Activated B cell treated with CpG ODN at 0.5 μM for 24 hours (primary cell): ENCODE measurements at regions of chr16 and their contacts with region 1.

Region 1: GRCh38 chr16:1342526-1343427 is 8.9 kb downstream of the TSR3 start:
- DNase-seq: peak; percentile 87
- ATAC-seq: peak; percentile 90
- H3K4me3 Mint-ChIP-seq: peak overlapping the region; percentile 75
- H3K27ac Mint-ChIP-seq: peak overlapping the region; percentile 50
- H3K4me1 Mint-ChIP-seq: peaks cover 20% of the 10 kb centered on the region
- H3K27me3 Mint-ChIP-seq: no peaks in the 10 kb centered on the region
- CTCF ChIP-seq: no peak

Region 2: GRCh38 chr16:1331712-1332617 is 10.8 kb before region 1 on chr16:
- CTCF ChIA-PET with region 1: interaction called, 3 read pairs
- POLR2A ChIA-PET with region 1: interaction called, 17 read pairs
- intact Hi-C with region 1: loop called (anchors 1 kb)
- DNase-seq: peak; percentile 59
- ATAC-seq: peak; percentile 64
- H3K4me3 Mint-ChIP-seq: peak overlapping the region; percentile 78
- H3K27ac Mint-ChIP-seq: peak overlapping the region; percentile 86
- H3K4me1 Mint-ChIP-seq: peaks cover 36% of the 10 kb centered on the region
- H3K27me3 Mint-ChIP-seq: peaks cover 7% of the 10 kb centered on the region
- CTCF ChIP-seq: no peak

Region 3: GRCh38 chr16:1385232-1385631 is 42.5 kb after region 1 on chr16:
- CTCF ChIA-PET with region 1: no interaction called
- POLR2A ChIA-PET with region 1: no interaction called
- intact Hi-C with region 1: no loop called
- DNase-seq: no peak
- ATAC-seq: no peak
- H3K4me3 Mint-ChIP-seq: no peak overlapping the region
- H3K27ac Mint-ChIP-seq: no peak overlapping the region
- H3K4me1 Mint-ChIP-seq: peaks cover 2% of the 10 kb centered on the region
- H3K27me3 Mint-ChIP-seq: no peaks in the 10 kb centered on the region
- CTCF ChIP-seq: no peak

Region 4: GRCh38 chr16:1497014-1497598 is 154.3 kb after region 1 on chr16:
- CTCF ChIA-PET with region 1: no interaction called
- POLR2A ChIA-PET with region 1: no interaction called
- intact Hi-C with region 1: no loop called
- DNase-seq: no peak
- ATAC-seq: no peak
- H3K4me3 Mint-ChIP-seq: no peak overlapping the region
- H3K27ac Mint-ChIP-seq: no peak overlapping the region
- H3K4me1 Mint-ChIP-seq: peaks cover 15% of the 10 kb centered on the region
- H3K27me3 Mint-ChIP-seq: no peaks in the 10 kb centered on the region
- CTCF ChIP-seq: no peak